Mammary epithelial cell (primary cell): ENCODE measurements at regions of chr2 and their contacts with region 1.

Region 1: GRCh38 chr2:158745044-158745865 is 49.9 kb upstream of the DAPL1 start:
- DNase-seq: peak; percentile 51
- H3K4me3 ChIP-seq: no peak overlapping the region
- H3K27ac ChIP-seq: no peak overlapping the region
- H3K4me1 ChIP-seq: no peaks in the 10 kb centered on the region
- H3K27me3 ChIP-seq: no peaks in the 10 kb centered on the region
- CTCF ChIP-seq: peak; percentile 68 to 69

Region 2: GRCh38 chr2:157777427-157777826 is 967.8 kb before region 1 on chr2:
- CTCF ChIA-PET with region 1: no interaction called
- dilution Hi-C with region 1: no loop called
- in situ Hi-C with region 1: loop called in 1 of 2 experiments (anchors 25 kb)
- intact Hi-C with region 1: loop called (anchors 5 kb)
- DNase-seq: peak; percentile 28
- H3K4me3 ChIP-seq: no peak overlapping the region
- H3K27ac ChIP-seq: no peak overlapping the region
- H3K4me1 ChIP-seq: no peaks in the 10 kb centered on the region
- H3K27me3 ChIP-seq: no peaks in the 10 kb centered on the region
- CTCF ChIP-seq: peak; percentile 60 to 66

Region 3: GRCh38 chr2:158179660-158180059 is 565.6 kb before region 1 on chr2:
- CTCF ChIA-PET with region 1: interaction called, 5 read pairs
- dilution Hi-C with region 1: no loop called
- in situ Hi-C with region 1: loop called (anchors 10 kb)
- intact Hi-C with region 1: loop called (anchors 1 kb)
- DNase-seq: no peak
- H3K4me3 ChIP-seq: no peak overlapping the region
- H3K27ac ChIP-seq: no peak overlapping the region
- H3K4me1 ChIP-seq: no peaks in the 10 kb centered on the region
- H3K27me3 ChIP-seq: no peaks in the 10 kb centered on the region
- CTCF ChIP-seq: peak; percentile 34 to 53

Region 4: DNA sequence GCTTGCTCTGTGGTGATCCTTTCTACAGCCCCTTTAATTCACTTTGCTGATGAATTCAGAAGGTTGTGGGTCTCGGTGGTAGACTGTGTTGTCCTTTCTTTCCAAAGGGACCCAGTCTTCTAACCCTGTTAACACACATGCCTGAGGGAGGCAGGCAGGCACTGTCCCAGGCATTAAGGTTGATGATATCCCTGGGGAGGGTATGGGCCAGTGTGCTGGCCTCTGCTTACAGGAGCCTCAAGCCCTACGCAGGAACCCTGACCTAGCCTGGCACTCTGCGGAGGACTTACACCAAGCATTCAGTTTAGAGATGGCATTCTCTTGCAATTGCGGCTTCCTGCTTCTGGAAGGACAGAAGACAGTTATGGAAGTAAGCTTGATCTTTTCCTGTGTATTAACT is 186.0 kb before region 1 on chr2:
- CTCF ChIA-PET with region 1: no interaction called
- dilution Hi-C with region 1: no loop called
- in situ Hi-C with region 1: no loop called
- intact Hi-C with region 1: loop called (anchors 10 kb)
- DNase-seq: no peak
- H3K4me3 ChIP-seq: no peak overlapping the region
- H3K27ac ChIP-seq: no peak overlapping the region
- H3K4me1 ChIP-seq: no peaks in the 10 kb centered on the region
- H3K27me3 ChIP-seq: no peaks in the 10 kb centered on the region
- CTCF ChIP-seq: no peak

Region 5: GRCh38 chr2:158667586-158667985 is 77.7 kb before region 1 on chr2:
- CTCF ChIA-PET with region 1: interaction called, 9 read pairs
- dilution Hi-C with region 1: no loop called
- in situ Hi-C with region 1: no loop called
- intact Hi-C with region 1: loop called (anchors 5 kb)
- DNase-seq: peak; percentile 74
- H3K4me3 ChIP-seq: no peak overlapping the region
- H3K27ac ChIP-seq: no peak overlapping the region
- H3K4me1 ChIP-seq: peaks cover 15% of the 10 kb centered on the region
- H3K27me3 ChIP-seq: no peaks in the 10 kb centered on the region
- CTCF ChIP-seq: peak in 1 of 2 donors; percentile 2